ENCODE measurements at regions of chr1 and their contacts with region 1.

Region 1: DNA sequence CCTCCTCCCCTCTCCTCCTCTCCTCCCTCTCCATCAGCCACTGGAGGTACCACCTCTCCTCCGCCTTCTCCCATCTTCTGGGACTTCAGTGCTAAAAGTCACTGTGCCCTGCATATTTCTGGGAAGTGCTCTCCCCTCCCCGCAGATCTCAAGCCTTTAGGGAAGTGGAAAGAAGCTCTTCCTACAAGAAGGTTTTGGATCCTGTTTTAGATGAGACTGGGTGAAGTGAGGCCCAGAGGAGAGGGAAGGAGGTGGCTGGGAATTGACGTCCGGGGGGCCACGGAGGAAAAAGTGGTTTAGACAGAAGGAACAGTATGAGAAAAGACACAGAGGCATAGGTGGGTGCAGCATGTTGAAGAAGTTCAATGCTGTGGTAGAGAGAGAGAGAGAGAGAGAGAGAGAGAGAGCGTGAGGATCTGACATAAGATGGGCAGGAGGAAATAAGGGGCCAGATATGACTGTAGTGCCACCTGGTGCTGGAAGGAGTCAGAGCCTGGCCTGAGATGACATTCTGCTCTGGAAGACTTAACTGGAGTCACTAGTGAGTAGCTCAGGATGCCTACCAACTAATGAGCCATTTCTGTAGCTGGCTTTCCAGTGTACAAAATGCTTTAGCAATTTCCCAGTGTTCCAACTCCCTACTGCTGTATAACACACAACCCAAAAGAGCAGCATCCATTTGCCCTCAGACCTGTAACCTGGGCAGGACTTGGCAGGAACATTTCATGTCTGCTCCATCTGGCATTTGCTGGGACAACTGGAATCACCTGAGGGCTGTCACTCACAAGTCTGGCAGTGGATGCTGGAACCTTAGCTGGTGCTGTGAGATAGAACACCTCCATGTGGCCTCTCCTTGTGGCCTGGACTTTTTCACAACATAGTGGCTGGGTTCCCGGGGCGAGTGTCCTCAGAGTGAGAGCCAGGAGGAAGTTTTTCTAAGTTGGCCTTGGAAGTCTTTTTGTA is 16.6 kb upstream of the ZSCAN20 start:
- DNase-seq: peak in 1 of 2 experiments; percentile 52
- H3K4me3 ChIP-seq: no peak overlapping the region
- H3K27ac ChIP-seq: no peak overlapping the region
- H3K4me1 ChIP-seq: peaks cover 0 to 3% (median 1%) of the 10 kb centered on the region in 4 experiments; a peak in 3 of 7 replicates
- H3K27me3 ChIP-seq: 0 out of 7 replicates have a peak, but pooled peaks cover 0 to 2% (median 0%) of the 10 kb centered on the region in 4 experiments
- CTCF ChIP-seq: peak; percentile 68 to 93 (median 77)
- EP300 ChIP-seq: no peak
- POLR2A ChIP-seq: no peak
- RAD21 ChIP-seq: peak; percentile 83 to 87

Region 2: GRCh38 chr1:33367485-33368405 is 88.1 kb before region 1 on chr1:
- CTCF ChIA-PET with region 1: interaction called, 14 read pairs
- POLR2A ChIA-PET with region 1: interaction called, 5 read pairs
- DNase-seq: peak; percentile 58 to 95
- H3K4me3 ChIP-seq: no peak overlapping the region
- H3K27ac ChIP-seq: no peak overlapping the region
- H3K4me1 ChIP-seq: peaks cover 13 to 29% (median 18%) of the 10 kb centered on the region in 4 experiments
- H3K27me3 ChIP-seq: no peaks in the 10 kb centered on the region; a peak in 2 of 7 replicates
- CTCF ChIP-seq: peak; percentile 94 to 97 (median 97)
- EP300 ChIP-seq: no peak
- POLR2A ChIP-seq: no peak
- RAD21 ChIP-seq: peak; percentile 98 to 99

Region 3: DNA sequence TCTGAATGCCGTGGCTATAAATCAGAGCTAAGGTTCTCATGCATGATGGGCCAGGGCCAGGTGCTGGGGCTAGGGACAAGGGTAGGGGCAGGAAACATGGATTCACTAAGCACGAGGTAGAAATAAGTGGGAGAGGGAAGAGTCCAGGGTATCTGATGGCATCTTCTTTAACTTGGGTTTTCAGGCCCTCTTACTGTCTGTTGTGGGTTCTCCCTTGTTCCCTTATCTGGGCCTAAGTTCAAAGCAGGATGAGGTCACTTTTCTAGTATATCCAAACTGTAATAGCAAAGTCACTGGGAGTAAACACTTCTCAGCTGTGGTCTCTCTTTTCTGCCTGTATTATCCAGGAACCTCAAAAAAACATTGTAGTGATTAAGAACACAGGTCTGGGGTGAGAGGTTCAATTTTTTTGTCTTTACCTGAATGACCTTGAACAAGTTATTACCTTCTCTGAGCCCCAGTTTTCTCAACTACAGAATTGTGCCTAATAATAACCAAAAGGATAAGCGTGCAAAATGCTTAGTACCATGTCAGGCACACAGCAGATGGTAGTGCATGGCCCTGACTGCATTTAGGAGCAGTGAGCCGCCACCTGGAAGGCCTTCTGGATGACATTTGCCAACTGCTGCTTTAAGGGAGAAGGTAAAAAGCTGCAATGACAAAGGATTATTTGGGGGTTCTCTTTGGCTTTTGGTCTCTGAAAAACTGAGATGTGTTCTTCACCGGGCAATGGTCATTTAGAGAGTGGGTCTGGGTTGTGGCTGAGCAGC is 81.3 kb before region 1 on chr1:
- CTCF ChIA-PET with region 1: interaction called, 14 read pairs
- POLR2A ChIA-PET with region 1: no interaction called
- DNase-seq: no peak
- H3K4me3 ChIP-seq: no peak overlapping the region
- H3K27ac ChIP-seq: no peak overlapping the region
- H3K4me1 ChIP-seq: peaks cover 0 to 7% (median 4%) of the 10 kb centered on the region in 4 experiments; a peak in 4 of 7 replicates
- H3K27me3 ChIP-seq: no peaks in the 10 kb centered on the region
- CTCF ChIP-seq: no peak
- EP300 ChIP-seq: no peak
- POLR2A ChIP-seq: no peak
- RAD21 ChIP-seq: no peak

Region 4: GRCh38 chr1:33433509-33434362 is 22.1 kb before region 1 on chr1:
- CTCF ChIA-PET with region 1: interaction called, 12 read pairs
- POLR2A ChIA-PET with region 1: no interaction called
- DNase-seq: no peak
- H3K4me3 ChIP-seq: no peak overlapping the region
- H3K27ac ChIP-seq: no peak overlapping the region
- H3K4me1 ChIP-seq: peaks cover 0 to 15% (median 5%) of the 10 kb centered on the region in 4 experiments
- H3K27me3 ChIP-seq: peaks cover 0 to 22% (median 13%) of the 10 kb centered on the region in 4 experiments; a peak in 5 of 7 replicates
- CTCF ChIP-seq: no peak
- EP300 ChIP-seq: no peak
- POLR2A ChIP-seq: no peak
- RAD21 ChIP-seq: no peak

Region 5: GRCh38 chr1:33443080-33443704 is 12.6 kb before region 1 on chr1:
- CTCF ChIA-PET with region 1: interaction called, 23 read pairs
- POLR2A ChIA-PET with region 1: no interaction called
- DNase-seq: no peak
- H3K4me3 ChIP-seq: no peak overlapping the region
- H3K27ac ChIP-seq: no peak overlapping the region
- H3K4me1 ChIP-seq: peaks cover 0 to 4% (median 2%) of the 10 kb centered on the region in 4 experiments; a peak in 4 of 7 replicates
- H3K27me3 ChIP-seq: no peaks in the 10 kb centered on the region
- CTCF ChIP-seq: no peak
- EP300 ChIP-seq: no peak
- POLR2A ChIP-seq: no peak
- RAD21 ChIP-seq: no peak

Region 6: DNA sequence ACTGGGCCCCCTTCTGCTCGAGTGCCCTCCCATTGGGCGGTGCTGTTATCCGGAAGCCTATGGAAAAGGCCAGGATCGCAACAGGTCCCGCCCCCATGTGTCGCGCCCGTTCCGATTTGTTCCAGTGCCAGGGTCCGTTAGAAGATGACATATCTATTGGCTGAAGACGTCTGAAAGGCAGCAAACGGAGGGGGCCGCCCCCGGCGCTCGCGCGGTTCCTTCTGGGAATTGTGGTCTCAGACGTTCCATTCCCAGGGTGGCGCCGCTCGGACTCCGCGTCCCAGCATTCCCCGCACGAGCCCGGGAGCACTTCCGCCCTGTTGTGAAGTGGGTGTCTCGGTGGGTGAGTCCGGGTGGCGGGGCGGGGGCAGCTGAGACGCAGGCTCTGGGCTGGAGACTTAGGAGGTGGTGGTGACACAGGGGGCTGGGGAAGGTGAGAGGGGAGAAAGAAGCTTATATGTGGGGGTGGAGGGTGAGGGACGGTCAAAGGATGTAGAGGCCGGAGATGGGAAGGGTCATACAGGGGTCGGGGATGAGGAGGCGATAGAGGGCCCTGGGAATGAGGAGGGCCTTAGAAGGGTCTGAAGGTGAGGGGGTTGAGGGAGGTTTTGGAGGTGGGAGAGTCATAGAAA is 16.6 kb after region 1 on chr1 and contains the start of gene ZSCAN20:
- CTCF ChIA-PET with region 1: interaction called, 75 read pairs
- POLR2A ChIA-PET with region 1: interaction called, 4 read pairs
- DNase-seq: peak; percentile 93 to 94
- H3K4me3 ChIP-seq: peak within 1 kb of the TSS; percentile 51 to 73 (median 65)
- H3K27ac ChIP-seq: no peak within 1 kb of the TSS
- H3K4me1 ChIP-seq: peaks cover 0 to 7% (median 2%) of the 10 kb centered on the region in 4 experiments; a peak in 3 of 7 replicates
- H3K27me3 ChIP-seq: no peaks in the 10 kb centered on the region
- CTCF ChIP-seq: 0 out of 4 replicates have a peak, but pooled peaks of 1 of the 3 experiments have one; percentile 2
- EP300 ChIP-seq: no peak
- POLR2A ChIP-seq: peak in 1 of 2 experiments; percentile 36; a peak in 1 of 3 replicates
- RAD21 ChIP-seq: no peak
- total RNA-seq, gene ZSCAN20: 3.4 and 3.7 TPM in 2 replicates

Region 7: DNA sequence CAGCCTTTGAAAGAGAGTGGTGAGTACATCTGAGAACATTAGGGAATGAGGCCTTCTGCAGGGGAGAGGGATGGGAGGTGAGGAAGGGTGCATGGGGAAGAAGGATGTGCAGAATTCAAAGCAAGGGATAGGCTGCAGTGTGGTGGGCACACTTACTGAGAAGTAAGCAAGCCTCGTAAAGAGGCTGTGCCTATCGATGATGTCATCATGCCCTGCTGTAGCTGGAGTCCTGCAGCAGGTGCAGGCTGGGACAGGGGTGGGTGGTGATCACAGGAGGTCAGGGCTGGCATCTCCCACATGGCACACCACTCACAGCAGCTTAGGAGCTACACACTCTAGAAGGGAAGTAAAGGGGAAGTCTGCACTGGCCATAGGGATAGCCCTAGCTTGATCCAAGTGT is 32.8 kb after region 1 on chr1:
- CTCF ChIA-PET with region 1: no interaction called
- POLR2A ChIA-PET with region 1: no interaction called
- DNase-seq: no peak
- H3K4me3 ChIP-seq: no peak overlapping the region
- H3K27ac ChIP-seq: no peak overlapping the region
- H3K4me1 ChIP-seq: no peaks in the 10 kb centered on the region
- H3K27me3 ChIP-seq: no peaks in the 10 kb centered on the region
- CTCF ChIP-seq: no peak
- EP300 ChIP-seq: no peak
- POLR2A ChIP-seq: no peak
- RAD21 ChIP-seq: no peak

Region 8: DNA sequence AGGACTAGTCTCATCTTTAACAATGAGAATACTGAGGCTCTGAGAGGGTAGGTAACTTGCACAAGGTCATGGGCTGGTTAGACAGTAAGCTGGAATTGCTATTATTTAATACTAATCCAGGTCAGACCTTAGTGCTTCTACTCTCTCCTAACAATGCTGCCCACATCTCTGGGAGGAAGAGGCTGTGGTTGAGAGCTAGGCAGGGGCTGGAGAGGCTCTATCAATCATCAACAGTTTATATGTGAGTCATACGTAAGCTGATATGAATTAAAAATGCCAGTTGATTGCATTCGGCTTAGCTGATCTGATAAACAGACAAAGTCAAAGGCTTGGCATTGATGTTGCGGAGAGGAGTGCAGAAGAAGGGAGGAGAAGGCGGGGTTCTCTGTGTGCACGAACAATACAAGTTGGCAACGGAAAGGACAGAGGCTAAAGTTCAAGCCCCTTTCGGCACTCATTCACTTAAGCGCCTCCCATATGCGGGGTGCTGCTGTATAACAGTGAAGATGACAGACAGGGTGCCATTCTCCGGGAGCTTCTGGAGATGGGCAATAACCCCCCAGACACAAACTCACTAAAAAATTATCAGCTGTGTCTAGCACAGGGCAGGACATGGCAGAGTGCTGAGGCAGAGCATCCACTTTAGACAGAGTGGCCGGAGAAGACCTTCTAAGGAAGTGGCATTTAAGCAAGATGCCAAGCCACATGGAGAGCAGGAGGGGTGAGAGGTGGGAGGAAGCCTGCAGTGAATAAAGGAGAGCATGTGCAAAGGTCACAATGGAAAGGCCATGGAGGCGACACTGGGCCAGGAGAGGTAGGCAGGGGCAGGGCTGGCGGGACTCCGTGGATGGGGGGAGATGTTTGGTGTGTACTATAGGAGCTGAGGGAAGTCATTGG is 211.8 kb after region 1 on chr1:
- CTCF ChIA-PET with region 1: no interaction called
- POLR2A ChIA-PET with region 1: no interaction called
- DNase-seq: no peak
- H3K4me3 ChIP-seq: no peak overlapping the region
- H3K27ac ChIP-seq: no peak overlapping the region
- H3K4me1 ChIP-seq: no peaks in the 10 kb centered on the region
- H3K27me3 ChIP-seq: no peaks in the 10 kb centered on the region; a peak in 1 of 7 replicates
- CTCF ChIP-seq: no peak
- EP300 ChIP-seq: no peak
- POLR2A ChIP-seq: no peak
- RAD21 ChIP-seq: no peak

Measured in H1 (cell line).